H1 (cell line): ENCODE measurements at regions of chr17 and their contacts with region 1.

Region 1: GRCh38 chr17:73998653-73999645 is 204.5 kb upstream of the RPL38 start:
- DNase-seq: peak; percentile 39 to 91
- H3K4me3 ChIP-seq: no peak overlapping the region
- H3K27ac ChIP-seq: no peak overlapping the region
- H3K4me1 ChIP-seq: peaks cover 0 to 3% (median 0%) of the 10 kb centered on the region in 4 experiments; a peak in 2 of 7 replicates
- H3K27me3 ChIP-seq: no peaks in the 10 kb centered on the region
- CTCF ChIP-seq: peak; percentile 86 to 99 (median 95)
- EP300 ChIP-seq: no peak
- POLR2A ChIP-seq: no peak
- RAD21 ChIP-seq: peak; percentile 78 to 81

Region 2: DNA sequence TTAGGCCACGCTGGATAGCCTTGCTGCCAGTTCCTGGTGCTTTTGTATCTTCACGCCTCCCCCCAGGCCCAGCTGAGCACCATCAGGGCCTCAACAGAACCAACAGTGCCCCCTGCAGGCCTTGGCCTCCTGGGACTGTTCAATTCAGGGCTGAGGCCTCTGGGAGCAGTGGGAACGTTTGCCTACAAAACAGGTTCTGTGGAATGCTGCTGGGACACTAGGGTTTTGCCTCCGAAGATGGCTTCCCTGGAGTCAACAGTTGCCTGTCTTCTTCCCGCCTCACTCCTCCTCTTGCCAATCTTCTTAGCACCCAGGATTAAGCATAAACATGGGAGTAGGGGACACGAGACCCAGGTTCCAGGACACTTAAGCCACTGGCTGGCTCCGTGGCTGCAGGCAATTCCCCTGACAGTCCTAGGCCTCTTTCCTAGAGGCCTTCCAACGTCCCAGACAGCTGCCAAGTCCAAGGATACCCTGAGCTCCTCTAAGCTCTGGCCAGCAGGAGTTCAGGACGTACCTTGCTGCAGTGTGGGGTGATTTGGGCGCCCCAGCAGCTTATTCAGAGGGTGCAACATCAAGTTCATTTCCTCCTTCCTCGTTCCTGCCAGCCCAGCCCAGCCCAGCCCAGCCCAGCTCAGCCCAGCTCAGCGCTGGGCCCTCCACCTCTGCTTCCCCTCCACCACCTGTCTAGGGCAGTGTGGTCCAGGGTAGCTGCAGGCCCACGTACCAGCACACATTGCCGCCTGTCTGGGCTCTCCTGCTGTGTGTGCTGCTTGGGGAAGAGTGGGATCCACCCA is 42.1 kb before region 1 on chr17:
- CTCF ChIA-PET with region 1: interaction called, 18 read pairs
- POLR2A ChIA-PET with region 1: no interaction called
- DNase-seq: peak; percentile 59 to 94
- H3K4me3 ChIP-seq: no peak overlapping the region
- H3K27ac ChIP-seq: no peak overlapping the region; the same call in 1 of the 2 replicates
- H3K4me1 ChIP-seq: peaks cover 0 to 7% (median 6%) of the 10 kb centered on the region in 4 experiments; a peak in 5 of 7 replicates
- H3K27me3 ChIP-seq: peaks cover 0 to 16% (median 12%) of the 10 kb centered on the region in 4 experiments; a peak in 6 of 7 replicates
- CTCF ChIP-seq: peak; percentile 82 to 94 (median 93)
- EP300 ChIP-seq: peak in 1 of 2 experiments; percentile 32; a peak in 1 of 3 replicates
- POLR2A ChIP-seq: no peak
- RAD21 ChIP-seq: peak; percentile 86 to 93

Region 3: DNA sequence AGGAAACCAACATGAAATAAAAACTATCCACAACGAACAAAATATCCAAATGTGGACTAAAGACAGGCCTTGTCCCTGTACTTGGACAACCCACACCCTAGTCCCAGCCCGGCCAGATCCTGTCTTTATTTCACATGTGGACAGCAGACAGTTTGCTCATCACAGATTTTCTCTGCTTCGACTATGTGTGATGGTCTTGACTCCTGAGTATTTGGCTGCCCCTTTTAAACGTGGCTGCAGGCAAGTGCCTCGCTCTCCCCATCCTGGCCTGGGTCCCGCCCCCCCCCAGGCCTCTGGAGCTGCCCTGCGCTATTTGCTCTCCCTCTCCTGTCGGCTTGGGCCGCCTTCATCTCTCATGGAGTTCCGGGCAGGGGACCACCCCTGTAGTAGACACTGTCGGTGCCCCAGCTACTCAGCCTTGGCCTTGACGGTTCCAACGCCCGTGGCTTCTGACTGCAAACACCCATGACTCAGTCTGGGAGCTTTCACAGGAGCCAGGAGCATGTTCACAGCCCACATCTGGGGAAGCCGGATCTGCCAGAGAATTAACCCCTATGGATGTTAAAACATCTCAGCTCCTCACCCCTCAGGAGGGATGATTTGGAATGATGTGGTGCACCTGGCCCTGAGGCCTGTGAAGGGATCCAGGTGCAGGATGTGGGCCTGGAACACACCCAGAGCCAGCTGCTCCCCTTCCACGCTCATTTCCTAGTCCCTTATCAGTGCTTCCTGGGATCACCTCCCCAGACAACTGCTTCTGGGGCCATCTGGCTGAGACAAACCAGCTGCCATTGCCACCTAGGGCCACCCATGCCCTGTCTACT is 25.2 kb before region 1 on chr17:
- CTCF ChIA-PET with region 1: interaction called, 15 read pairs
- POLR2A ChIA-PET with region 1: no interaction called
- DNase-seq: no peak
- H3K4me3 ChIP-seq: no peak overlapping the region
- H3K27ac ChIP-seq: no peak overlapping the region
- H3K4me1 ChIP-seq: peaks cover 0 to 11% (median 6%) of the 10 kb centered on the region in 4 experiments; a peak in 6 of 7 replicates
- H3K27me3 ChIP-seq: no peaks in the 10 kb centered on the region; a peak in 1 of 7 replicates
- CTCF ChIP-seq: no peak
- EP300 ChIP-seq: no peak
- POLR2A ChIP-seq: no peak
- RAD21 ChIP-seq: no peak

Region 4: DNA sequence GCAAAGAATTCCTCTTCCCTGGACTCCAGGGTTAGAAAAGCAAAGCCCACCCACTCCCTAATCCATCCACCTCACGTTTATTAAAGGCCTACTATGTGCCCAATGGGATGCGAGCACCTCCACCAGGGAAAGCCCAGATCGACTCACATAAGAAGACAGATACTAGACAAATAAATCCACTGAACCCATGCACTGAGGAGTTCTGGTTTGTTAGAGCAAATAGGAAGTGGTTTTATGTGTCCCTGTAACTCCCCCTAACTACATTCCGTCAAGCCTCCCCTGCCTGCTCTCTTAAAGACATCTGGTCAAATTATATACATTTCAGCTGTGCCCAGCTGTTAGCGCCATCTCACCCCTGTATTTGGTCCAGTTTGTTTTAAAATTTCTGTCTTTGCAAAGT is 14.0 kb before region 1 on chr17:
- CTCF ChIA-PET with region 1: interaction called, 64 read pairs
- POLR2A ChIA-PET with region 1: no interaction called
- DNase-seq: no peak
- H3K4me3 ChIP-seq: no peak overlapping the region
- H3K27ac ChIP-seq: no peak overlapping the region
- H3K4me1 ChIP-seq: peaks cover 0 to 2% (median 0%) of the 10 kb centered on the region in 4 experiments; a peak in 2 of 7 replicates
- H3K27me3 ChIP-seq: 0 out of 7 replicates have a peak, but pooled peaks cover 0 to 2% (median 0%) of the 10 kb centered on the region in 4 experiments
- CTCF ChIP-seq: no peak
- EP300 ChIP-seq: no peak
- POLR2A ChIP-seq: no peak
- RAD21 ChIP-seq: no peak

Region 5: DNA sequence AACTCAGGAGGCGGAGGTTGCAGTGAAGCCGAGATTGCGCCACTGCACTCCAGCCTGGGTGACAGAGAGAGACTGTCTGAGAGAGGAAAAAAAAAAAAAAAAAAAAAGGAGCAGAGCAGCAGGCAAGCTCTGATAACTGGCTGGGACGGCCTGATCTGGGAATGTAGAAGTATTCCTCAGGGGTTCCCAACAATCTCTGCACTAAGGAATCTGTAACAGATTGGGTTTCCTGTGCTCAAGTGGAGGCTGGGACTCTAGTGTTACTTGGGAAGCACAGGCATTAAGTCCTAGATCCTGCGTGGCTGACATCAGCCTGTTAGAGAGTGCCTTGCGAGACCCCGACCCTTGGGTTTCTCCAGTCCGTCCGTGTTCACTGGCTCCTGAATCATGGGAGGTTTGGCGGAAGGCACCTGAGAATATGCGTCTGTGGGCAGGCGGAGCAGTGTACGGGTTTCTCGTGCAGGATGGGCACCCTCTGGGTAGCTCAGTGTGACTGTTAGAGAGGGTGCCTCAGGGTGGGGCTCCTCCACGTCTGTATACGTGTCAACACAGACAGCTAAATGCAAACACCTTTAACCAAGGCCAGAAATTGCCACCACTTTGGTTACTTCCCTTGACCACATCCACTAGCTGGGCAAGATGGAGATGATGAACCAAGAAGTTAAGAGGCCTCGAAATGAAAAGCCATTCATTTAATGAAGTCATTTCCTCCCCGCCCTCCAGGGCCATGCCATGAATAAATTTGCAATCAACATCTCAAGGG is 29.6 kb after region 1 on chr17:
- CTCF ChIA-PET with region 1: interaction called, 10 read pairs
- POLR2A ChIA-PET with region 1: no interaction called
- DNase-seq: no peak
- H3K4me3 ChIP-seq: no peak overlapping the region
- H3K27ac ChIP-seq: no peak overlapping the region
- H3K4me1 ChIP-seq: peaks cover 0 to 12% (median 4%) of the 10 kb centered on the region in 4 experiments; a peak in 5 of 7 replicates
- H3K27me3 ChIP-seq: no peaks in the 10 kb centered on the region; a peak in 1 of 7 replicates
- CTCF ChIP-seq: no peak
- EP300 ChIP-seq: no peak
- POLR2A ChIP-seq: no peak
- RAD21 ChIP-seq: no peak